Activated T-helper 1 cell treated with anti-CD3 and anti-CD28 coated beads, Interleukin-12 subunit alpha, Interleukin-12 subunit beta, Interleukin-2, Interleukin-4 antibody, amounts not matched to agents 30 ng/mL and 10 ng/mL and 1 ng/mL, durations not matched to agents 14 hours and 24 hours and 36 hours (primary cell): ENCODE measurements at regions of chr14 and their contacts with region 1.

Region 1: GRCh38 chr14:50116181-50116956 is at the start of gene VCPKMT:
- DNase-seq: peak; percentile 95
- H3K4me3 Mint-ChIP-seq: peak within 1 kb of the TSS; percentile 97
- H3K27ac Mint-ChIP-seq: peak within 1 kb of the TSS; percentile 98
- H3K4me1 Mint-ChIP-seq: peaks cover 33% of the 10 kb centered on the region
- H3K27me3 Mint-ChIP-seq: no peaks in the 10 kb centered on the region
- total RNA-seq, gene VCPKMT: 12.3 and 15.2 TPM in 2 replicates

Region 2: GRCh38 chr14:49620182-49621113 is 495.9 kb before region 1 on chr14 and contains the starts of genes MGAT2 and RPL36AL:
- intact Hi-C with region 1: loop called (anchors 1 kb)
- DNase-seq: peak; percentile 96
- H3K4me3 Mint-ChIP-seq: peak within 1 kb of the TSS; percentile 98
- H3K27ac Mint-ChIP-seq: peak within 1 kb of the TSS; percentile 98
- H3K4me1 Mint-ChIP-seq: peaks cover 53% of the 10 kb centered on the region
- H3K27me3 Mint-ChIP-seq: peaks cover 2% of the 10 kb centered on the region
- total RNA-seq, gene MGAT2: 57.5 and 58.3 TPM in 2 replicates
- total RNA-seq, gene RPL36AL: 224 and 237 TPM in 2 replicates

Region 3: DNA sequence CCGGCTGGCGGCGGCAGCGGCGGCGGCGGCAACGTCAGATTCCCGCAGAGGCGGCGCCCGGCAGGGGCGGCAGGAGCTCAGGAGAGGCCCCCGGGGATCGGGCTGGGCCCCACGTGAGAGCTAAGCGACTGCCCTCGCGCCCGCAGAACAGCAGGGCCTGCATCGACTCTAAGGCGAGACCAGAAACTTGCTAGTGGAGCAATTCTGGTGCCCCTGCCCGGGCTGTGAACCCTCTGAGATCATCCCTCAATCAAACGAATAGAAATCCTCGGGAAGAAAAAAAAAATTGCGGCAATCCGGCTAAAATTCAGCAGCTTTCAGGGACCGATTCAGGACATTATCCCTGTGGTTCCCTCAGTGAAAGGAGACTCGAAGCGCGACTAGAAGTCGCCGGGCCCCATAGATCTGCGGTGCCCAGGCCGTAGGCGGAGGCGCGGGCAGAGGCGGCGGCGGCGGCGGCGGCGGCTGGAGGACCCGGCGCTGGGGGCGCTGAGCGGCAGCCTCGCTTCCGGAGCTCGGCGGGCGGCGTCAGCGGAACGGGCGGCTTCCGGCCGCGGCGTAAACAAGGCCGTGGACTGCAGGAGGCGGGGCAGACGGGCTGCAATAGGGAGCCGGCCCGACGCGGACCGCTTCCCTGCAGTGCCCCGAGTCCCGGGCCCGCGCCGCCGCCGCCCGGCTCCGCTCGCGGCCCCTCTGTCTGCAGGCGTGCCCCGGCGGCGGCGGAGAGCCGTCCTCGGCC is 348.6 kb before region 1 on chr14 and contains the start of gene KLHDC2:
- intact Hi-C with region 1: loop called (anchors 2 kb)
- DNase-seq: peak; percentile 89
- H3K4me3 Mint-ChIP-seq: peak within 1 kb of the TSS; percentile 99
- H3K27ac Mint-ChIP-seq: peak within 1 kb of the TSS; percentile 100
- H3K4me1 Mint-ChIP-seq: peaks cover 33% of the 10 kb centered on the region
- H3K27me3 Mint-ChIP-seq: peaks cover 2% of the 10 kb centered on the region
- total RNA-seq, gene KLHDC2: 23.7 and 26.2 TPM in 2 replicates

Region 4: DNA sequence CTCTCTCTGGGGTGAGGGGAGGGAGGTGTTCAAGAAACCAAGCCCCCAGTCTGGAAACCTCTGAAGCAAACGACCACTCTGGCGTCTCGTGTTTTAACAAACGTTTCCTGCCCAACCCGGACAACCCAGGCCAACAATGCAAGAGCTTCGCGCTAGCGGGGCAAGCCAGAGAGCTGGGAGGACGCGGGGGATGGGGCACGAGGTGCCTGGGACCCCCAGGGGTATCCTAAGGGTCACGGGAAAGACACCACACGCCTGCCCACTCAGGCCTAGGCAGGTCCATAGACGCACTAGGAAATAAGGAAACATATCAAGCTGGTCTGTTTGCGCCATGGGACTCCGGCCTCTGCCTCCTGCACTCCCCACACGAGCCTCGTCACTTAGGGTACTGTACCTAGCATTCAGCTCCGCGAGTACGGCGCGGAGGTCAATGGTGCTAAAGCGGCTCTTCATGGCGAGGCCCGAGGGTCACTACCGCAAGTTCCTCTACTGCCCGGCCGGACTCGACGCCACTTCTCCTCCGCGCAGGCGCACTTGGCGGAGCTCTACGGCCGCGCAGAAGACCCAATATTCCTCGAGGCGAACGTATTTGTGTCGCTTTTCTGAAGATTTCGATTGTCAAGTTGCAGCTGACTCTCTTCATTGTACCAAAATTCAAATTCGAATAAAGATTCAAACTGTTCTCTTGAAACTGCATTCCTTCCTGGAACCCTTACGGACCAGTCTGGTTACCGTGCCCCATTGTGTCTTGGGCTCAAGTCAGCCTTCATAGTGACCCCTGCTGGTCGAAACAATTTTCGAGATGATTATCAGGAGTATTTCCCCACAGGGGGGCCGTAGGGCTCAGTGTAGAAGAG is 263.8 kb before region 1 on chr14 and contains the start of gene NEMF:
- intact Hi-C with region 1: loop called (anchors 1 kb)
- DNase-seq: peak; percentile 78
- H3K4me3 Mint-ChIP-seq: peak within 1 kb of the TSS; percentile 96
- H3K27ac Mint-ChIP-seq: peak within 1 kb of the TSS; percentile 97
- H3K4me1 Mint-ChIP-seq: peaks cover 50% of the 10 kb centered on the region
- H3K27me3 Mint-ChIP-seq: no peaks in the 10 kb centered on the region
- total RNA-seq, gene NEMF: 79.9 and 89.3 TPM in 2 replicates

Region 5: DNA sequence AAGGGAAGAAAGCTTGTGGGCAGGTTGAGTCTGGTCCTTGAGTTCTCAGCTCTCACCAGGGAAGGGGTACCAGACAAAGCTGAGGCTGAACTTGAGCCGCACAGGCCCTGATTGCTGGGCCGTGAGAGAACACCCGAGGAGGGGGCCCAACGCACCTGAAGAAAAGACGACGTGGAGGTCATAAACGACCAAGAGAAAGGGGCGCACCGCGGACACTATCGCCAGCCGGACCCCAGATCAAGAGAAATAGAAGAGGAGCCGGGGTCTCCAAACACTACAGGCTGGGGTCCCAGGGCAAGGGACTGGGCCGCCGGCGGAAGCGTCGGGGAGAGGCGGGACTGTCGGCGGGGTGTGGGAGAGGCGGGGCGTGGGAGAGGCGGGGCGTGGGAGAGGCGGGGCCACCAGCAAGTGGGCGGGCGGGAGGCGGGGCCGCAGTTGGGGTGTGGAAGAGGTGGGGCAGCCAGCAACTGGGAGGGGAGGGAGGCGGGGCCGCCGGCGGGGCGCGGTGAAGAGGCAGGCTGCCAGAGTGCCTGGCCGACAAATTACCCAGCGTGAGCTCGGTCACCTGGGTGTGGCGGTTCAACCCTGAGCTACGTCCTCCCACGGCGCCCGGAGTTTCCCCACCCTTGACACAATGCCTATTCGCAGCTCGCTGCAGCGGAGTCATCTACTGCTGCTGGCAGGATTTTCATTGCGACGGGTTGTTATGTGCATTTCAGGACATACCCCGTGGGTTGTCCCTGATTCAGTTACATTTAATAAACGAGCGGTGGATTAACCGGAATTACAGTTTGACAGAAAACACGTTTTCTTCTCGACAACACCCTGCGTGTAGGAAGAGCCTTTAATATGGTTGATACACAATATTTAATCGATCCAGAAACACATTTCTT is 248.3 kb before region 1 on chr14:
- intact Hi-C with region 1: loop called (anchors 1 kb)
- DNase-seq: peak; percentile 92
- H3K4me3 Mint-ChIP-seq: peak overlapping the region; percentile 93
- H3K27ac Mint-ChIP-seq: peak overlapping the region; percentile 97
- H3K4me1 Mint-ChIP-seq: peaks cover 20% of the 10 kb centered on the region
- H3K27me3 Mint-ChIP-seq: no peaks in the 10 kb centered on the region

Region 6: DNA sequence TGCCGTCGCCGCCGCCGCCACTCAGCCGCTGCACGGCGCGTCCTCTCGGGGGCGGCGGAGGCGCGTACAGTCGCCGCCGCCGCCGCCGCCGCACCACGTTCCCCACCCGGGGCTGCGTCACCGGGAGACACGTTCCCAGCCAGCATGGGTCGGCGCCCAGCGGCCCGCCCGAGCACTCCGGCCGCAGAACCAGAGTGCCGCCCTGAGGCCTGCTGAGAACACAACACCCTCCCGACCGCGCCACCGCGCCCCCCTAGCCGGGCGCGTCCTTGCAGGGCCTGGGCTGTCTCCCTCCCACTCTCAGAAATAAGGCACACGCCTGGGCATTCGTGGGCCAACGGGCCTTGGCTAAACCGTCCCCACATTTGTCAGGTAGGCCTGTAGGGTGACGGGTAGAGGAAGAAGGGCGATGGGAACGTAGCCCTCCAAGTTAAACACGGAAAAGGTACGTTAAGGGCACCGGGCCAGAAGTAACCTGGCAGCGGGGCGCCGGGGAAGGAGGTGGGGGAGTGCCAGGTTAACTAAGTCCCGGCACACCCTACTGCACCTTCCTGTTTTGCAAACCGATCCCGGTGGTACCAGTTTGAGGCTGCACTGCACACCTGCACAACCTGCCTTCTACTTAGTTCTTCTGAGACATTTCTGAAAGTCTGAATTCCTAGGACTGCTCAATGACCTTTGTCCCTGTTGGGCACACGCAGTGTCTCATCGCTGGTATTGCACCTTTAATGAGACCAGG is 416.3 kb after region 1 on chr14 and contains the start of gene MAP4K5:
- intact Hi-C with region 1: loop called (anchors 2 kb)
- DNase-seq: peak; percentile 82
- H3K4me3 Mint-ChIP-seq: peak within 1 kb of the TSS; percentile 92
- H3K27ac Mint-ChIP-seq: peak within 1 kb of the TSS; percentile 79
- H3K4me1 Mint-ChIP-seq: peaks cover 42% of the 10 kb centered on the region
- H3K27me3 Mint-ChIP-seq: peaks cover 24% of the 10 kb centered on the region
- total RNA-seq, gene MAP4K5: 26.4 and 27.5 TPM in 2 replicates